Sciatic nerve (tissue), 2 donors: ENCODE measurements at regions of chr16 and their contacts with region 1.

Region 1: GRCh38 chr16:51797669-51798259 is 646.7 kb upstream of the SALL1 start:
- DNase-seq: no peak
- ATAC-seq: no peak

Region 2: DNA sequence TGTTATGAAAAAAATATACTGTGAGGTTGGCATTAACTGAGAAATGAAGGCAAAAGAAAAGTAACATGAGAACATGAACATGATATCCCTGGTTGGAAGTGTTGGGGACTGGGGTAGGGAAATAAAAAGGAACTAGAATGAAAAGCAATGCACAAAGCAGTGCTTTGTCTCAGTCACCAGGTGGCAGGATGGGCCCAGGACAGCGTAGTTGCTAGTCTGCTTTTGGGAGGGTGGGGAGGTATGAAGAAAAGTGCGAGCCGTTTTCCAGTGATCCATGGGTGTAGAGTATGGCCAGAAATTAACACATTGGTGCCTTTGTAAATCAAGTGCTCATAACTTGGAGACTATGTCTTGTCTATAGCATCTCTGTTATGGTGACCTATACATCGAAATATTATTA is 15.8 kb after region 1 on chr16:
- intact Hi-C with region 1: loop called (anchors 1 kb)
- DNase-seq: no peak
- ATAC-seq: no peak

Region 3: DNA sequence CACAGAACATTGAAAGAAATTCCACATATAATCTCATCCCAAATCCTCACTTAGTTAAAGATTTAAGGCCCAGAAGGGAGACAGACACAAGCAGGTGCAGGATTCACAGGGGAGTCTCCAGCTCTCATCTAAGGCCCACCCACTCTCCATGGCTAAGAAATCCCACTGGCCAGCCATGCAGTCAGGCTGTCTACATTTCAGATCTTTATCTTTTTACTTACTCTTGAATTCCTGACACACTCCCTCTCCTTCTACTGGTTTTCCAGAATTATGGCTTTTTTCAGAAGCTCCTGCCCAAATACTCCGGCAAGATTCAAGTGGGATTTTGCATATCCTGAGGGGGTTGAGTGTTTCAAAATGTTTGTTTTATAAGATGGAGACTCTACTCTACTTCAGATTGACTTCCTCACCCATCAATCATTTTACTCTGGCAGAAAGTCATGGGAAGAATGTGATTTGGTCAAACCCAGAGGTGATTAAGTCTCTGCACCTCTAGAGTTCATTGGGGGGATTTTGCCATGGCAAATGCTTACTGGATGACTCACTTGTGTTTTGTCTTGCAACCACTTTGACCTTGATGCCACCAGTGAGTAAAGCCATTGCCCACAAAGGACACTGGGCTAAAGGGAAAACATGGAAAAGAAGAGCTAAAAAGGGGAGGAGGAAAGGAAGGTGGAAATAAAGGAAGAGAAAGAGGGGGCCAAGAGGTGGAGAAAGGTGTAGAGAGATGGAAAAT is 42.1 kb after region 1 on chr16:
- intact Hi-C with region 1: no loop called
- DNase-seq: no peak
- ATAC-seq: no peak

Region 4: GRCh38 chr16:52488837-52489289 is 691.1 kb after region 1 on chr16:
- intact Hi-C with region 1: no loop called
- DNase-seq: no peak
- ATAC-seq: no peak